WTC11 (cell line): ENCODE measurements at regions of chr19 and their contacts with region 1.

Region 1: DNA sequence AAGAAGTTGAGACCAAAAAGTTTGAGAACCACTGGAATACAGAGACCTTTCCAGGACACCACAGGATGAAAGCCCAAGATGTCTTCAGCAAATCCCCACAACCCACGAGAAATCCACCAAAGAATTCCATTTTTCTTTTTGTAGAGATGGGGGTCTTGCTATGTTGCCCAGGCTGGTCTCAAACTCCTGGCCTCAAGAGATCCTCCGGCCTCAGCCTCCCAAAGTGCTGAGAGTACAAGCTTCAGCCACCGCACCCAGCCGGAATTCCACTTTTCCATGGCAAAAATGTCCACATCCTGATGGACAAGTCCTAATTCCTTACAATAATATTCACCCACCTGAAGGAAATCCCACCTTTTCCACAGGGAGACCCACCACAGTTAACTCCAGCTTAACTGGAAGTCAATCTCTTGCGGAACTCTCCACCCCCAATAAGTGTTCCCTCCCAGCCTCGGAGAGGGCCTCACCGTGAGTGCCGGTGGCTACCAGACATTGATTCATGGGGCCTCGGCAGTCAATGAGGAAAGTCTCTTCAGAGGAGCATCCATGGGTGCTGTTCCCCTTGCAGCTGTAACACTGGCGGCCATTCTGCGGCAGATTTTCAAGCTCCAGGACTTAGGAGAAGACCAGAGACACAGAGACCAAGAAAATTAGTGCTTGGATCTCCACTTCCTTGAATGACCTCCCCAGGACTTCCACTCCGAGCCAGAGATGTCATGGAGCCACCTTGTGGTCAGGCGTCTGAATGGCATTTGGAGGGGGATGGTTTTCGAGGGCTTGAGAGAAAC is 12.3 kb upstream of the CADM4 start:
- DNase-seq: peak; percentile 74
- ATAC-seq: peak; percentile 88
- H3K4me3 Mint-ChIP-seq: no peak overlapping the region
- H3K27ac Mint-ChIP-seq: 0 out of 2 replicates have a peak overlapping the region, but pooled peaks have one; percentile 78
- H3K4me1 Mint-ChIP-seq: peaks cover 2% of the 10 kb centered on the region; the same call in 1 of the 2 replicates
- H3K27me3 Mint-ChIP-seq: peaks cover 2% of the 10 kb centered on the region; the same call in 1 of the 2 replicates
- CTCF ChIP-seq: peak; percentile 62

Region 2: GRCh38 chr19:43634872-43635560 is 16.9 kb before region 1 on chr19:
- CTCF ChIA-PET with region 1: interaction called, 16 read pairs
- POLR2A ChIA-PET with region 1: no interaction called
- DNase-seq: no peak
- ATAC-seq: peak; percentile 53
- H3K4me3 Mint-ChIP-seq: peak overlapping the region; percentile 82
- H3K27ac Mint-ChIP-seq: peak overlapping the region; percentile 41; the same call in 1 of the 2 replicates
- H3K4me1 Mint-ChIP-seq: peaks cover 20% of the 10 kb centered on the region
- H3K27me3 Mint-ChIP-seq: peaks cover 63% of the 10 kb centered on the region
- CTCF ChIP-seq: no peak

Region 3: DNA sequence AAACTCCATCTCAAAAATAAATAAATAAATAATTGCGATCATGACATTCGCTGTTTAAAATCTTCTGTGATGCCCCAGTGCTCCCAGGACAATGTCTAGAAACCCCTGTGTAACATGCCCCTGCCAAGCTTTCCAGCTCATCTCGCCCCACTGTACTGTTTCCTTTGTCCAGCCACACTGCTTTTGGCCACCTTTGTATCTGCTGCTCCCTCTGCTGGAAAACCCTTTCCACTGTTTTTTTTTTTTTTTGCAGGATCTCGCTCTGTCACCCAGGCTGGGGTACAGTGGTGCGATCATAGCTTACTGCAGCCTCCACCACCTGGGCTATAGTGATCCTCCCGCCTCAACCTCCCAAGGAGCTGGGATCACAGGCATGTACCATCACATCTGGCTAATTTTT is 10.5 kb after region 1 on chr19:
- CTCF ChIA-PET with region 1: interaction called, 15 read pairs
- POLR2A ChIA-PET with region 1: no interaction called
- DNase-seq: no peak
- ATAC-seq: peak; percentile 79
- H3K4me3 Mint-ChIP-seq: no peak overlapping the region
- H3K27ac Mint-ChIP-seq: no peak overlapping the region; the same call in 1 of the 2 replicates
- H3K4me1 Mint-ChIP-seq: peaks cover 6% of the 10 kb centered on the region
- H3K27me3 Mint-ChIP-seq: peaks cover 8% of the 10 kb centered on the region
- CTCF ChIP-seq: peak; percentile 19; the same call in 1 of the 2 replicates

Region 4: GRCh38 chr19:43718627-43719377 is 66.8 kb after region 1 on chr19:
- CTCF ChIA-PET with region 1: no interaction called
- POLR2A ChIA-PET with region 1: no interaction called
- DNase-seq: no peak
- ATAC-seq: no peak
- H3K4me3 Mint-ChIP-seq: no peak overlapping the region
- H3K27ac Mint-ChIP-seq: no peak overlapping the region
- H3K4me1 Mint-ChIP-seq: no peaks in the 10 kb centered on the region
- H3K27me3 Mint-ChIP-seq: no peaks in the 10 kb centered on the region
- CTCF ChIP-seq: no peak